Naive thymus-derived CD4-positive, alpha-beta T cell (primary cell): ENCODE measurements at regions of chr10 and their contacts with region 1.

Region 1: GRCh38 chr10:6751373-6751772 is 171.3 kb upstream of the PRKCQ start:
- DNase-seq: no peak
- ATAC-seq: no peak
- H3K4me3 ChIP-seq: no peak overlapping the region
- H3K4me3 Mint-ChIP-seq: no peak overlapping the region
- H3K27ac ChIP-seq: no peak overlapping the region
- H3K27ac Mint-ChIP-seq: no peak overlapping the region
- H3K4me1 ChIP-seq: no peaks in the 10 kb centered on the region
- H3K4me1 Mint-ChIP-seq: no peaks in the 10 kb centered on the region
- H3K27me3 ChIP-seq: no peaks in the 10 kb centered on the region
- H3K27me3 Mint-ChIP-seq: peaks cover 16 to 33% (median 21%) of the 10 kb centered on the region in 5 donors

Region 2: GRCh38 chr10:6713716-6714115 is 37.7 kb before region 1 on chr10:
- CTCF ChIA-PET with region 1: no interaction called
- POLR2A ChIA-PET with region 1: no interaction called
- intact Hi-C with region 1: loop called in 1 of 2 experiments (anchors 1 kb)
- DNase-seq: peak in 6 of 9 donors; percentile 4 to 33 (median 19)
- ATAC-seq: no peak
- H3K4me3 ChIP-seq: no peak overlapping the region
- H3K4me3 Mint-ChIP-seq: no peak overlapping the region
- H3K27ac ChIP-seq: no peak overlapping the region
- H3K27ac Mint-ChIP-seq: no peak overlapping the region
- H3K4me1 ChIP-seq: peaks cover 0 to 6% of the 10 kb centered on the region in 2 donors
- H3K4me1 Mint-ChIP-seq: peaks cover 2 to 13% (median 7%) of the 10 kb centered on the region in 7 donors
- H3K27me3 ChIP-seq: no peaks in the 10 kb centered on the region
- H3K27me3 Mint-ChIP-seq: peaks cover 23 to 54% (median 29%) of the 10 kb centered on the region in 5 donors

Region 3: DNA sequence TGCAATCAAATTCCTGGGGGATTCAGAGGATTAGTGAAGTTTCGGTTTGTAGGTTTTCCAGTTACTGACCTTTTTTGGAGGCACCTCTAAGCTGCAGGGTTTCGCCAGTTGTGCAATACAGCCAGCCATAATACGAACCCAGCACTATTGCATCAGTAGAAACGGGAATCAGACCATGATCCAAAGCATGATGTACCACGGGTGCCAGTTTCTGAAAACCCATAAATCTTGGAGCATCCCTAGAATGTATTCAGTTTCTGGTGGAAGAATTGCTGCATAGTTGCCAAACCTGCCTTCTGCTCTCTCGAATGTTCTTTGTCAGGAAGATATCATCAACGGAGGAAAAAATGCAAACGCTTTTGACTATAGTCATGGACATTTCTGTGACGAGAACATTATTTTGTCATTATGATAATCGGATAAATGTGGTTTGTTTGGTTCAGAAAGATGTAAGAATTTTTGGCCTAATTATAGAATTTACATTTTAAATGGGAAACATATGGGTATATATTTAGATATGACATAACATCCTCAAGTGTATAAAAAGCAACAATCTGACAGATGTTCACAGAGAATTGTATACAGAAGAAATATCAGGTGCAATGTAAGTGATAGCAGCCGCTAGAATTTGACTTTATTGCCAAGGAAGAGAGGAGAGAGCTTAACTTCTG is 14.9 kb after region 1 on chr10:
- CTCF ChIA-PET with region 1: no interaction called
- POLR2A ChIA-PET with region 1: no interaction called
- intact Hi-C with region 1: no loop called
- DNase-seq: no peak
- ATAC-seq: no peak
- H3K4me3 ChIP-seq: no peak overlapping the region
- H3K4me3 Mint-ChIP-seq: no peak overlapping the region
- H3K27ac ChIP-seq: no peak overlapping the region
- H3K27ac Mint-ChIP-seq: no peak overlapping the region
- H3K4me1 ChIP-seq: no peaks in the 10 kb centered on the region
- H3K4me1 Mint-ChIP-seq: no peaks in the 10 kb centered on the region
- H3K27me3 ChIP-seq: no peaks in the 10 kb centered on the region
- H3K27me3 Mint-ChIP-seq: peaks cover 22 to 48% (median 29%) of the 10 kb centered on the region in 5 donors